HEK293T (cell line): ENCODE measurements at regions of chr12 and their contacts with region 1.

Region 1: DNA sequence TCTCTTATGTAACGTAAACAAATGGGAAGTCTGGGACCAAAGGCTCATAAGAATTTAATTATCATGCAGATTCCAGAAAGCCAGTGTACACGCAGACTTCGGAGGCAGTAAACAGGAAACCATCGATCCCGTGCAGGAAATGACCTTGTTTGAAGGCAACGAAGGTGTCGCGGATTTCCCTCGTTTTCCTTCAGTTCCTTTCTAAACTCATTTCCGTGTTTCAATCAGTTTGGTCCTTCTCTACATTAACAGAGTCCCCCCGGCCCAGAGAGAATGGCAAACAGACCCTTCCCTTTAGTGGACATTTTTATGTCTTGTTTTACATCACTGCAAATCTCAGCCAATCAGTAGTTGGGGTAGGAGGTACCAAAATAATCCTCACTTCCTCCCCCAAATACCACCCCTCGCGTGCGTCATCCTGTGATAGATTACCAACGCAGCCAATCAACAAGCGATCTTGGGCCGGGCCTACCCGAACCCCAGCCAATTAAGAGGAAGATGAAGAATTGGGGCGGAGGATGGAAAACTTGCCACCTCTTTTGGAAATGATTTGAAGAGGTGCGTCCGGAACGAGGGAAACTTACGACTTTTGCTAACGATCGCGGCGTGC is 6.1 kb upstream of the FOXJ2 start:
- DNase-seq: peak; percentile 95

Region 2: DNA sequence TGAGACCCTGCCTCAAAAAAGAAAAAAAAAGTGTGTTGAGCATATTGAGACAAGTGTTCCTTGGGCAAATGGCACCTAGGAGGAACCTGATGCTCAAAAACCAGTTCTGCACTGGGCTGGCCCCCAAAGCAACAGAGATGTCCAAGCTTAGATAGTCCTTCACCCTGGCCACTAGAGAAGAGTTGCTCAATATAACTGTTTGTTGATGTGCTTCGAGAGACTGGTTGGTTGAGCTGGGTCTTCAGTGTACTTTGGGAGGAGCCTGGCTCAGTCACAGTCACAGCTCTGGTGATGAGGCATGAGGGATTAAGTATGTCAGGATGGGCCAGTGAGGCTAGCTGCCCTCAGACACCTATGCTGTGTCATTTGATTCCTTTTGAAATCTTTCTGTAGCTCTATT is 191.7 kb before region 1 on chr12:
- CTCF ChIA-PET with region 1: no interaction called
- POLR2A ChIA-PET with region 1: no interaction called
- DNase-seq: no peak

Region 3: DNA sequence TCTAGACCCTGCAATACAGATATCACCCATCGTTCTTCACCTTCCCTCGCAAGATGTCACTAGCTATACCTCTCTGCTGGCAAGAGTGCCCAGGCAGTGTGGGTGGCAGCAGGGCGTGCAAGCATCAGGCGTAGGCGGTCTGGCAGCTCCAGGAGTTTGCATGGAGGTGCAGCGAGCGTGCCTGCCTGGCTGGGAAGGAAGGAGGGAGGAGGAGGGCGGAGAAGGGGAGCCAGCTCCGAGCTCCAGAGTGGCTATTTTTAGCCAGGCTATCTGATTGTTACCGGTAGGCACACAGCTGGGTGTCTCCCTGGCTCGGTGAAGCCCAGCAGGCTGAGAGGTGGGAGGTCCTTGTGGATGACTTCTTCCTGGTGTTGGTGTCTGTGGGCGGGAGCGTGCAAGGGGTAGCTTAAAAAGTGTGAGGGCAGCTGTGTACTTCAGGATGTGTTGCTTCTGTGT is 12.3 kb after region 1 on chr12:
- CTCF ChIA-PET with region 1: interaction called, 5 read pairs
- POLR2A ChIA-PET with region 1: interaction called, 13 read pairs
- DNase-seq: peak; percentile 53